ENCODE measurements at regions of chr1 and their contacts with region 1.

Region 1: DNA sequence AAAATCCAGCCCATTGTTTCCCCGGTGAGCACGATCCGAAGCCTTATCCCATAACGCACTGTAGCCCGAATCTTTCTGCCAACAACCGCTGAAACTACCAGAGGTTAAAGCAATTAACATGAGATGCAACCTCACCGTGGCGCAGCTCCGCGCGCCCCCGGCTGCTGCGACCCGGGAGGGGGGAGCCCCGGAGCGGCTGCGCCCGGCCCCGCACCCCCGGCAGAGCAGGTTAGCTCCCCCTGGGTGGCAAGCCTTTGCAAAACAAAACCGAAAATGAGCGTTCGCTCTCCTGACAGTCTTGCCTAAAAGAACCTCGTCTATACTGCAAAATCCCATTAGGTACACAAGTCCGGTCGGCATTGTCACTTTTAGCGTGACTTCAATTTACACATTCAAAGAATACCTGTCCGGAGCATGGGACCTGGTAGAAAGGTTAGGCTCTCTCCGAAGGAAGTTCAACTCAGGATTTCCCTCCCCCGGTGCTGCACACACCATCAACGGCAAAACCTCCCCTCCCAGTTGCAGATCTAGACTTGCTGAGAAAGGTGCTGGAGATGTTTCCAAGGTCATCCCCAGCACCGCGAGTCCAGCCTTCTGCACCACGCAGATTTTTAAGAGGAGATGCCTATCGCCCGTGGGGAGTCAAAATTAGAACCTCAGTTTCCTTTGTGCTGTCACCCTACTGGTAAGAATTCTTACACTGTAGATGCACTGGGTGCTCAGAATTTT is 107.5 kb downstream of the ZNF281 start:
- DNase-seq: peak in 1 of 2 experiments; percentile 36
- H3K4me3 ChIP-seq: peak overlapping the region; percentile 66
- H3K27ac ChIP-seq: no peak overlapping the region
- H3K4me1 ChIP-seq: no peaks in the 10 kb centered on the region
- H3K27me3 ChIP-seq: no peaks in the 10 kb centered on the region
- CTCF ChIP-seq: no peak

Region 2: DNA sequence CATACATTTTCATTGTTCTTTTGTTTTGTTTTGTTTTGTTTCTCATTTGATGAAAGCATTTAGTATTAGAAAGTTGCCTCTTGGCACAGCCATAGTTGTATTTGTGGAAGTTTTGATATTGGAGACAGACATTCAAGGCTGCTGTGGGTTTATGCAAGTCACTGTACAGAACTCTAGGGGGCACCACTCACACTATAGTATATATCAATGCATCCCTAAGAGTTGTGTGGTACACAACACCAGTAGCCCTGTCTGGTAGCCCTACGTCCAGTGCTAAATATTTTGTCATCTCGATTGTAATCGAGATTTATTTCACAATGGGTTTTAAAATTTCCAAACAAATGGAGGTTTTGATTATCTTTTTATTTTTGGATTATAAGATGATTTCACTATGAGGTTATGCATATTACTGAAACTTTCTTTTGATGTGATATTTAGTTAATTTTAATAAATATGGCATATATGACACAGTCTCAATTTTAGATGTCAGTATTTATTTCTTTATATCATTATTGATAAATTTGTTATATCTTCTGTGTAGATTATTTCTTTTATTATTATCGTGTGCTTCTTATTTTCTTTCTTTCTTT is 162.6 kb before region 1 on chr1:
- CTCF ChIA-PET with region 1: no interaction called
- POLR2A ChIA-PET with region 1: no interaction called
- intact Hi-C with region 1: loop called (anchors 10 kb)
- DNase-seq: no peak
- H3K4me3 ChIP-seq: no peak overlapping the region
- H3K27ac ChIP-seq: no peak overlapping the region
- H3K4me1 ChIP-seq: no peaks in the 10 kb centered on the region
- H3K27me3 ChIP-seq: no peaks in the 10 kb centered on the region
- CTCF ChIP-seq: peak; percentile 69

Region 3: DNA sequence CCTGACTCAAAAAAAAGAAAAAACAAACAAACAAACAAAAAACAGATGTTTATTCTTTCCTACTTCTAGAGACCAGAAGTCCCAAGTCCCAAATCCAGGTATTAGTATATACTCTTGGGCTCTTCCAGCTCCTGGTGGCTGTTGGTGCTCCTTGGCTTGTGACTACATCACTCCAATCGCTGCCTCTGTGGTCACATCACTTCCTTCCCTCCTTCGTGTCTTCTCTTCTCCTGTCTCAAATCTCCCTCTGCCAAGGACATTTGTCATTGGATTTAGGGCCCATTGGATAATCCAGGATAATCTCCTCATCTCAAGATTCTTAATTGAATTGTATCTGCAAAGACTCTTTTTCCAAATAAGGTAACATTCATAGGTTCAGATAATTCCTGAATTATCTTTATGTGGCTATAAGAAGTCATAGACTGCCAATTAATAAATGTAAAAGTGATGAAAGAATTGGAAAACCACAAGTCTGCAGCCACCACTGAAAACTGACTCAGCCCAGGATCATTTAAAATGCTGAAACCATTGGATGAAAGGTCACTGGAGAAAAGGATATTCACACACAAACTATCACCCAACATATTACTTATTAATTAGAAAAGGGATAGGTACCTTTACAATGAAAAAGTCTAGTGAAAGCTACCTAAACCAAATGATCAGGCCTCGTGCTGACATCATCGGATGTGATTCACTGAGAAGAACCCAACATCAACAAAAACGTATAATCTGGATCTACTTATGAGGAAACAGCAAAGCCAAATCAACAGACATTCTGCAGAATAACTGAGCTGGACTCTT is 40.4 kb after region 1 on chr1:
- CTCF ChIA-PET with region 1: no interaction called
- POLR2A ChIA-PET with region 1: interaction called, 10 read pairs
- intact Hi-C with region 1: no loop called
- DNase-seq: peak in 1 of 2 experiments; percentile 41
- H3K4me3 ChIP-seq: no peak overlapping the region
- H3K27ac ChIP-seq: peak overlapping the region; percentile 66
- H3K4me1 ChIP-seq: peaks cover 38% of the 10 kb centered on the region
- H3K27me3 ChIP-seq: no peaks in the 10 kb centered on the region
- CTCF ChIP-seq: no peak

Region 4: DNA sequence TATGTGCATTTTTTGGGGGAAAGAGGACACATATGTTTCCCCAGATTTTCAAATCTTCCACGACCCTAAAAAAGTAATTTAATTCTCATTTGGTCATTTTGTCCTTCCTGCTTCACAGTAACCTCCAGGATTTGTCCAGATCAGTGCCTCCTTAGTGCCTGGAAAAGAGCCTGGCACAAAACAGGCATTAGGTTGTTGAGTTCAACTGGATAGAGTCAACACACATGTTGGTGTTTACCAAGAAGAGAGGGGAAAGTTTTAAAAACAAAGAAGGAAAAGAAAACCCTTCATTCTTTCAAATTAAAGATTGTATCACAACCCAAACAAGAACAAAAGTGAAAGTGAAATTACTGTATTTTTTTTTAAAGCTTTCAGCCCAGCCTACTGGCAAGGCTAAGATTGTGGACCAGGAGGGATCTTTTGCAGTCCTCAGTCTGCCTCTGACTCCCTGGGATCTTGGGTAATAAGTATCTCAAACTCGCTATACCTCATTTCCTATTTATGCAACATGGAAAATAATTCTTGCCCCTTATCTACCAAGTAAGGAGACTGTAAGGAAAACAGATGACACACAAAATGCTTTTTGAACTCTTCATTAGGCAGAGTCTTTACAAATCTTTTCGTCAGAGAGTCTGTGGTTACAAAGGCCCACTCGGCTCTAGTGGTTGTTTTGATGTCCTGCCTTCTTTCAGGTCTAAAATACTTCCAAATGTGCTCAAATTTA is 49.6 kb after region 1 on chr1:
- CTCF ChIA-PET with region 1: interaction called, 12 read pairs
- POLR2A ChIA-PET with region 1: no interaction called
- intact Hi-C with region 1: no loop called
- DNase-seq: peak in 1 of 2 experiments; percentile 65
- H3K4me3 ChIP-seq: no peak overlapping the region
- H3K27ac ChIP-seq: peak overlapping the region; percentile 33
- H3K4me1 ChIP-seq: peaks cover 19% of the 10 kb centered on the region
- H3K27me3 ChIP-seq: no peaks in the 10 kb centered on the region
- CTCF ChIP-seq: no peak

Region 5: GRCh38 chr1:200409761-200410565 is 107.6 kb after region 1 on chr1 and contains the start of gene ZNF281:
- CTCF ChIA-PET with region 1: no interaction called
- POLR2A ChIA-PET with region 1: no interaction called
- intact Hi-C with region 1: loop called (anchors 5 kb)
- DNase-seq: peak; percentile 83 to 95
- H3K4me3 ChIP-seq: peak within 1 kb of the TSS; percentile 77
- H3K27ac ChIP-seq: peak within 1 kb of the TSS; percentile 70
- H3K4me1 ChIP-seq: peaks cover 66% of the 10 kb centered on the region
- H3K27me3 ChIP-seq: no peaks in the 10 kb centered on the region
- CTCF ChIP-seq: no peak
- total RNA-seq, gene ZNF281: 14.8 and 18.8 TPM in 2 replicates

Measured in PC-9 (cell line).